ENCODE measurements at regions of chr13 and their contacts with region 1.

Region 1: GRCh38 chr13:100514788-100515409 is 73.7 kb downstream of the GGACT start:
- DNase-seq: peak; percentile 79
- H3K4me3 ChIP-seq: no peak overlapping the region
- H3K27ac ChIP-seq: no peak overlapping the region
- H3K4me1 ChIP-seq: no peaks in the 10 kb centered on the region
- H3K27me3 ChIP-seq: no peaks in the 10 kb centered on the region
- CTCF ChIP-seq: peak; percentile 81 to 91
- POLR2A ChIP-seq: no peak

Region 2: GRCh38 chr13:99916366-99917103 is 598.4 kb before region 1 on chr13:
- CTCF ChIA-PET with region 1: interaction called, 65 read pairs
- POLR2A ChIA-PET with region 1: no interaction called
- dilution Hi-C with region 1: no loop called
- intact Hi-C with region 1: loop called (anchors 1 kb)
- DNase-seq: peak; percentile 72
- H3K4me3 ChIP-seq: no peak overlapping the region
- H3K27ac ChIP-seq: no peak overlapping the region
- H3K4me1 ChIP-seq: no peaks in the 10 kb centered on the region
- H3K27me3 ChIP-seq: peaks cover 0 to 10% of the 10 kb centered on the region in 2 experiments
- CTCF ChIP-seq: peak; percentile 78 to 83
- POLR2A ChIP-seq: no peak

Region 3: DNA sequence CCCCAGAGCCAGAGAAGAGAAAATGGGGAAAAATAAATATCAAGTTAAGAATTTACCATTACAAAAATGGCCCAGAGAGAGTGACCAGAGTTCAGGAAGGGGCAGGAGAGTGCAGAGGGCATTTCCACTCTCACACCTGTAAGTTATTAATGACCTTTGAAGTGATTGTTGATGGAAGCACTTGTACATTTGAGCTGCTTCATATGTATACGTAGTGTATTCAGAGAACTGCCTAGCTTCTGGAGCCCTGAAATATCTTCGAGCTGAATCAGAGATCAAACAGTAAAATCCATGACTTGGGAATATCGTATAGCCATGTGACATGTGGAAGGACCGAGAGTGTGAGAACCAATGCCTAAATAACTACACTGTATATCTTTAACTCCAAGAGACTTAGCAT is 475.2 kb before region 1 on chr13:
- CTCF ChIA-PET with region 1: interaction called, 11 read pairs
- POLR2A ChIA-PET with region 1: no interaction called
- dilution Hi-C with region 1: no loop called
- intact Hi-C with region 1: loop called (anchors 10 kb)
- DNase-seq: no peak
- H3K4me3 ChIP-seq: no peak overlapping the region
- H3K27ac ChIP-seq: no peak overlapping the region
- H3K4me1 ChIP-seq: no peaks in the 10 kb centered on the region
- H3K27me3 ChIP-seq: no peaks in the 10 kb centered on the region
- CTCF ChIP-seq: no peak
- POLR2A ChIP-seq: no peak

Region 4: DNA sequence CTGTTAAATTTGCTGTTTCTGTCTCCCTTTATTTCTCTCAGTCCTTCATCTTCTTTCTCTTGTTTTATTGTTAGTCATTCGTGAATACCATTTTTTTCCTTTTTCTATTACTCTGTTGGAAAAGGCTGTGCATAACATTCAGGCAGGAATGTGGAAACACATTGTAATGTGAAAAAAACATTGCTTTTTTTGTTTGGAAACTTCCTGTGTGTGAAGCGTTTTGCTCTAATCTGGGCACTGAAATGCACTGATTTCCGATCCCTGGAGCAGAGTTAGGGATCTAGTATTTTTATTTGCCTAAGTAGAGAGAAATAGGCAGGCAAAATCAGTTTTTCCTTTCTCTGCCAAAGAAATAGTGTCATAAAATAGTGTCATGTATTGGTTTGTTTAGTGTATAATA is 270.5 kb before region 1 on chr13:
- CTCF ChIA-PET with region 1: interaction called, 4 read pairs
- POLR2A ChIA-PET with region 1: no interaction called
- dilution Hi-C with region 1: no loop called
- intact Hi-C with region 1: loop called (anchors 2 kb)
- DNase-seq: peak; percentile 82
- H3K4me3 ChIP-seq: no peak overlapping the region
- H3K27ac ChIP-seq: no peak overlapping the region
- H3K4me1 ChIP-seq: peaks cover 9% of the 10 kb centered on the region
- H3K27me3 ChIP-seq: no peaks in the 10 kb centered on the region
- CTCF ChIP-seq: no peak
- POLR2A ChIP-seq: no peak

Region 5: DNA sequence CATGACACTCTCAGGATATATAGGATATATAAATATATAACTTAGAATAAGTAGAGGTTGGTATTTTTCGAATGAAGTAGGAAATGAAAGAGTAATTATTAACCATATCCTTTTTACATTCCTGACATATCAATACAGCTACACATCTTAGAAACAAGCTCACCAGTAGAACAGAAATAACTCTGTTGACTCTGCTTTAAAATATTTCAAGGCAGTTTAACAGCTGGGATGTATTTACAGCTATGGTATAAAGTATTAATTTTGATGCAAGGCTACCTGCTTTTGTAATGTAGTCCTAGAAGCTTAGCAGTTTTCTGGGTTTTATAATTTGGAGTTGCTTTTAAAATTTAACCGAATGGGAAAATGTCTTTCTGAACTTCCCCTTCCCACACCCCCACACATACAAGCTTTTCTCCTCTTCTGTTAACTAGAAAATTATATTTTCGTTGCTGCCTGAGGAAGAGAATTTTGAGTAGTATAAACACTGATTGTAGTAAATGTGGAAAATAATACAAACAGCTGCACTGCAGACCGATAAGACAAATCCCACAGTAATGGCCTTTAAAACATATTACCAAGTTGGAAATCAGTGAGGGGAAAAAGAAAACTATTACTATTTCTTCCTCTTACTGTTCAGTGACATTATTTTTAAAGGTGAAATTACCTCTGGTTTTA is 74.0 kb before region 1 on chr13:
- CTCF ChIA-PET with region 1: interaction called, 5 read pairs
- POLR2A ChIA-PET with region 1: no interaction called
- dilution Hi-C with region 1: no loop called
- intact Hi-C with region 1: loop called (anchors 5 kb)
- DNase-seq: peak; percentile 63
- H3K4me3 ChIP-seq: peak overlapping the region in 1 of 3 experiments; percentile 20
- H3K27ac ChIP-seq: peak overlapping the region; percentile 65
- H3K4me1 ChIP-seq: peaks cover 15% of the 10 kb centered on the region
- H3K27me3 ChIP-seq: no peaks in the 10 kb centered on the region
- CTCF ChIP-seq: no peak
- POLR2A ChIP-seq: no peak

Region 6: GRCh38 chr13:100892981-100893380 is 378.1 kb after region 1 on chr13:
- CTCF ChIA-PET with region 1: no interaction called
- POLR2A ChIA-PET with region 1: no interaction called
- dilution Hi-C with region 1: no loop called
- intact Hi-C with region 1: no loop called
- DNase-seq: no peak
- H3K4me3 ChIP-seq: no peak overlapping the region
- H3K27ac ChIP-seq: no peak overlapping the region
- H3K4me1 ChIP-seq: peaks cover 2% of the 10 kb centered on the region
- H3K27me3 ChIP-seq: peaks cover 0 to 2% of the 10 kb centered on the region in 2 experiments
- CTCF ChIP-seq: no peak
- POLR2A ChIP-seq: no peak